Activated T-helper 1 cell treated with anti-CD3 and anti-CD28 coated beads, Interleukin-12 subunit alpha, Interleukin-12 subunit beta, Interleukin-2, Interleukin-4 antibody, amounts not matched to agents 30 ng/mL and 10 ng/mL and 1 ng/mL, durations not matched to agents 14 hours and 24 hours and 36 hours (primary cell): ENCODE measurements at regions of chr13 and their contacts with region 1.

Region 1: GRCh38 chr13:106536244-106537034 is 977 bp upstream of the EFNB2 start:
- DNase-seq: peak; percentile 74
- H3K4me3 Mint-ChIP-seq: peak overlapping the region; percentile 93
- H3K27ac Mint-ChIP-seq: peak overlapping the region; percentile 84
- H3K4me1 Mint-ChIP-seq: peaks cover 18% of the 10 kb centered on the region
- H3K27me3 Mint-ChIP-seq: peaks cover 32% of the 10 kb centered on the region

Region 2: DNA sequence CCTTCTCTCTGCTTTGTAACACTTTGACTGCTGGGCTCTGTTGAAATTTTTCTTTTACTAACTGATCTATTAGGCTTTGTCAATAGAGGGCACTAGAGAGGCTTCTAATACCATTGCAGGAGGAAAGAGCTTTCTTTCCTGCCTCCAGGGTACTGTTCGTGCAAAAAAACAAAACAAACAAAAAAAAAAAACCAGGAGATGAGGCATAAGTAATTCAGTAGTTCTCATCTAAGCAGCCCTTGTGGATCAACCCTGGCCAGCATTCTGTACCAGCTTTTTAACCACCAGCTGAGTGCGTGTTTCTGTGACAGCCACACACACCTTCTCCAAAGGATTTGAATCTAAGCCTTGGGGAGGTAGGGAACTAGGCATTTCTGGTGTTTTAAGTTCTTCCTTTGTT is 1762.7 kb before region 1 on chr13:
- intact Hi-C with region 1: loop called (anchors 2 kb)
- DNase-seq: no peak
- H3K4me3 Mint-ChIP-seq: no peak overlapping the region
- H3K27ac Mint-ChIP-seq: no peak overlapping the region
- H3K4me1 Mint-ChIP-seq: no peaks in the 10 kb centered on the region
- H3K27me3 Mint-ChIP-seq: no peaks in the 10 kb centered on the region

Region 3: GRCh38 chr13:105410602-105411001 is 1125.8 kb before region 1 on chr13:
- intact Hi-C with region 1: loop called (anchors 5 kb)
- DNase-seq: no peak
- H3K4me3 Mint-ChIP-seq: no peak overlapping the region
- H3K27ac Mint-ChIP-seq: no peak overlapping the region
- H3K4me1 Mint-ChIP-seq: no peaks in the 10 kb centered on the region
- H3K27me3 Mint-ChIP-seq: no peaks in the 10 kb centered on the region

Region 4: DNA sequence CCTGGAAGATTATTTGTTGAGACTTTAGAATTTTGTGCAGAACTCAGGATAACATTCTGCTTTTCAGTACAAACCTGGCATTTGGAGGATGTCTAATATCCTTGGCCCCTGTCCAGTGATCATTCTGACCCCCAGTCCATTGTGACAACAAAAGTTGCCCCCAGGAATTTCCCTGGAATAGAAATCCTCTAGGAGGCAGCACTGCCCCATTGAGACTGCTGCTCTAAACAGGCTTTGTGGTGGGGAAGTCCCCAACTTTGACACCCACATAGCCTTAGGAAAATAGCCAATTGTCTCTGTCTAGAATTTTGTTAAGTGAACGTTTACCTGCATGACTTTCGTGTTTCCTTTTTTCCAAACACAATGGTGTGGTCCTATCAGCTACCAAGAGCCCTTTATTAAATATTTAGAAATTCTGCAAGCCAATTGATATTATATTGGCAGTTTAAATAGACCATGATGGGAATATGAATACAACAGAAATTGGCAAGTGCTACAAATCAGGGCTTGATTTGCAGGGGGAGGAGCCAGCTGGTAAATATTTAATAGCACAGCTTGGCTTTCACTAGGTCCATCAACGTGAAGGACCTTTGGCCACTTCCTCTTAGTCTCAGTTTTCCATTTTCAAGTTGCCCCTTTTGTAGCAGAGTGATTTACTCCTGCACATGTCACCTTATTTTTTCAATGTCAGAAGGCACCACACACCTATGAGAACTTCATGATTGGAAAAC is 452.7 kb before region 1 on chr13:
- intact Hi-C with region 1: loop called (anchors 1 kb)
- DNase-seq: no peak
- H3K4me3 Mint-ChIP-seq: no peak overlapping the region
- H3K27ac Mint-ChIP-seq: no peak overlapping the region
- H3K4me1 Mint-ChIP-seq: no peaks in the 10 kb centered on the region
- H3K27me3 Mint-ChIP-seq: no peaks in the 10 kb centered on the region

Region 5: DNA sequence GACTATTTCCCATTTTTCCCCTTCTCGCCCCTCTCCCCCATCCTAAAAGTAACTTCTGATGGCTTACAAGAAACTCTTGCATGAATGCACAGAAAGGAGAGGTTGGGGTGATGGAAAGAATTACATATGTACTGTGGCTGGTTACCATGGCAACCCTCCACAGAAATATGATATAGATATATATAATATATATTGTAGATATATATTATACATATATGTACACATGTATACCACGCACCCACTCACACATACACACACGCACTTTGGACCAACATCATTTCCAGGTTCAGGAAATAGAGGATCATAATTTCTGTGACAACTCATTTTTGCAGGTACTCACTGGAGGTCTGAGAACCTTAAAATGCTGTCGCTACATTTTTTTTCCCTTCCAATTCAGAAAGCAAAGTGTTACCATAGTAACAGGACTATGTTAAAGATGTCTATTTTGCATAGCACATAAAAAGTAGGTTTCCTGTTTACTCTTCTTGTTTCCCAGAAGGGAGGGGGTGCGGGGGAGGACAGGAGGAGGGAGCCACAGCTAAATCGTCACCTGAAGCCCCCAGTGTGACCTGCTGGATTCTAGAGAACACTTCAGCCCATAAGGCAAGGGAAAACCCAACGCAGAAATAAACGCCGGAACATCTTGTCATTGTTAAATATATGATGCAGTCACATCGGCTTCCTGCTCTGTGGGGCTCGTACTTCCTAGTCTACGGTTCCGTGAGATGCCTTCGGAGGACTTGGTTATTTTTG is 45.7 kb before region 1 on chr13:
- intact Hi-C with region 1: loop called (anchors 2 kb)
- DNase-seq: peak; percentile 5
- H3K4me3 Mint-ChIP-seq: peak overlapping the region; percentile 38
- H3K27ac Mint-ChIP-seq: peak overlapping the region; percentile 70
- H3K4me1 Mint-ChIP-seq: peaks cover 31% of the 10 kb centered on the region
- H3K27me3 Mint-ChIP-seq: peaks cover 23% of the 10 kb centered on the region

Region 6: GRCh38 chr13:106567474-106568298 is 31.2 kb after region 1 on chr13 and contains the start of gene ARGLU1:
- intact Hi-C with region 1: loop called (anchors 1 kb)
- DNase-seq: peak; percentile 94
- H3K4me3 Mint-ChIP-seq: peak within 1 kb of the TSS; percentile 99
- H3K27ac Mint-ChIP-seq: peak within 1 kb of the TSS; percentile 98
- H3K4me1 Mint-ChIP-seq: peaks cover 44% of the 10 kb centered on the region
- H3K27me3 Mint-ChIP-seq: peaks cover 2% of the 10 kb centered on the region
- total RNA-seq, gene ARGLU1: 89.8 and 91.5 TPM in 2 replicates

Region 7: DNA sequence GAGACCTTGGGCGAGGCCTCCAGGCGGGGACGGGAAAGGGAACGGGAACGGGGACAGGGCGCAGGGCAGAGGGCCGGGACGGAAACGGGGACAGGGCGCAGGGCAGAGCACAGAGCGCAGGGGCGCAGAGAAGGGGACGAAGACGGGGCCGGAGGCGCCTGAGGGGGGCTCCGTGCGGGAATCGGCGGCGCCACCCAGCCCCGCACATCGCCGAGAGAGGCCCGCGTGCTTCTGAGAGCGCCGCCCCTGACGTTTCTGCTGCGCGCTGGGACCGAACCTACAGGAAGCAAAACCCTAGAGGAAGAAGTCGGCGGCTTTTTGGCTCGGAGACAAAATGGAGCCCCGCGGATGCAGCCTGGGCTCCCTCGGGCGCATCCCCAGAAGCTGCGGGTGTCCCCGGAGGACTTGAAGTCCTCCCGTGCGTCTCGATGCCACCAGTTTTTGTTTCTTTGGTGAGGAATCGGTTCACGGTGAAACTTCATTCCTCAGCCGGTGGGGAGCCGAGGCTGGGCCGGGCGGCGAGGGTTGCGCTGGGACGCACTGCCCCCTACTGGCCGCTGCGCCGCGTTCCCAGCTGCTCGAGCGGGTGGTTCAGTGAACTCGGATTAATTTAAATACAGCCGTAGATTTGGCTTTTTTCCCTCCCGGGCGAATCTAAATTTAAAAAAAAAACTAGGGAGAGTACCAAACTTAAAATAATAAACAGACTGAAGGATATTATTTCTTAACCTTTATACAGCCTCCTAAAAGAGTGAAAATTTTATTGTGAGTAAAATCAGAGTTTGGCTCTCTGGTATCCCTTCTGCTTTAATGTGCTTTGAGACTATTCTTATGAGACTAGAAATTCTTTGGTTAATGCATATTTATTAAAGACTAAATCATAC is 381.5 kb after region 1 on chr13:
- intact Hi-C with region 1: loop called (anchors 2 kb)
- DNase-seq: peak; percentile 51
- H3K4me3 Mint-ChIP-seq: peak overlapping the region; percentile 78
- H3K27ac Mint-ChIP-seq: no peak overlapping the region
- H3K4me1 Mint-ChIP-seq: no peaks in the 10 kb centered on the region
- H3K27me3 Mint-ChIP-seq: peaks cover 21% of the 10 kb centered on the region